Naive thymus-derived CD4-positive, alpha-beta T cell (primary cell): ENCODE measurements at regions of chr1 and their contacts with region 1.

Region 1: GRCh38 chr1:160519642-160520435 is 3.2 kb downstream of the SLAMF6 start:
- DNase-seq: peak in 6 of 9 donors; percentile 33 to 60 (median 46)
- ATAC-seq: peak; percentile 72
- H3K4me3 ChIP-seq: peak overlapping the region; percentile 51
- H3K4me3 Mint-ChIP-seq: peak overlapping the region; percentile 87 to 98 (median 94)
- H3K27ac ChIP-seq: peak overlapping the region; percentile 84
- H3K27ac Mint-ChIP-seq: peak overlapping the region; percentile 88 to 99 (median 92)
- H3K4me1 ChIP-seq: peaks cover 34 to 53% of the 10 kb centered on the region in 2 donors
- H3K4me1 Mint-ChIP-seq: peaks cover 56 to 98% (median 93%) of the 10 kb centered on the region in 7 donors
- H3K27me3 ChIP-seq: no peaks in the 10 kb centered on the region
- H3K27me3 Mint-ChIP-seq: no peaks in the 10 kb centered on the region

Region 2: GRCh38 chr1:160428655-160429054 is 91.2 kb before region 1 on chr1:
- CTCF ChIA-PET with region 1: interaction called, 3 read pairs
- POLR2A ChIA-PET with region 1: interaction called, 6 read pairs
- intact Hi-C with region 1: loop called (anchors 1 to 2 kb)
- DNase-seq: peak in 6 of 9 donors; percentile 35 to 61 (median 47)
- ATAC-seq: peak; percentile 54
- H3K4me3 ChIP-seq: no peak overlapping the region
- H3K4me3 Mint-ChIP-seq: peak overlapping the region; percentile 3 to 74 (median 62)
- H3K27ac ChIP-seq: peak overlapping the region; percentile 68
- H3K27ac Mint-ChIP-seq: peak overlapping the region; percentile 84 to 99 (median 91)
- H3K4me1 ChIP-seq: peaks cover 55 to 56% of the 10 kb centered on the region in 2 donors
- H3K4me1 Mint-ChIP-seq: peaks cover 32 to 77% (median 68%) of the 10 kb centered on the region in 7 donors
- H3K27me3 ChIP-seq: no peaks in the 10 kb centered on the region
- H3K27me3 Mint-ChIP-seq: no peaks in the 10 kb centered on the region

Region 3: GRCh38 chr1:160460683-160461287 is 59.1 kb before region 1 on chr1:
- CTCF ChIA-PET with region 1: no interaction called
- POLR2A ChIA-PET with region 1: no interaction called
- intact Hi-C with region 1: loop called in 1 of 2 experiments (anchors 10 kb)
- DNase-seq: no peak
- ATAC-seq: no peak
- H3K4me3 ChIP-seq: peak overlapping the region; percentile 5
- H3K4me3 Mint-ChIP-seq: peak overlapping the region; percentile 9 to 86 (median 76)
- H3K27ac ChIP-seq: peak overlapping the region; percentile 27
- H3K27ac Mint-ChIP-seq: peak overlapping the region; percentile 20 to 96 (median 87)
- H3K4me1 ChIP-seq: peaks cover 7 to 25% of the 10 kb centered on the region in 2 donors
- H3K4me1 Mint-ChIP-seq: peaks cover 19 to 84% (median 67%) of the 10 kb centered on the region in 7 donors
- H3K27me3 ChIP-seq: no peaks in the 10 kb centered on the region
- H3K27me3 Mint-ChIP-seq: no peaks in the 10 kb centered on the region

Region 4: DNA sequence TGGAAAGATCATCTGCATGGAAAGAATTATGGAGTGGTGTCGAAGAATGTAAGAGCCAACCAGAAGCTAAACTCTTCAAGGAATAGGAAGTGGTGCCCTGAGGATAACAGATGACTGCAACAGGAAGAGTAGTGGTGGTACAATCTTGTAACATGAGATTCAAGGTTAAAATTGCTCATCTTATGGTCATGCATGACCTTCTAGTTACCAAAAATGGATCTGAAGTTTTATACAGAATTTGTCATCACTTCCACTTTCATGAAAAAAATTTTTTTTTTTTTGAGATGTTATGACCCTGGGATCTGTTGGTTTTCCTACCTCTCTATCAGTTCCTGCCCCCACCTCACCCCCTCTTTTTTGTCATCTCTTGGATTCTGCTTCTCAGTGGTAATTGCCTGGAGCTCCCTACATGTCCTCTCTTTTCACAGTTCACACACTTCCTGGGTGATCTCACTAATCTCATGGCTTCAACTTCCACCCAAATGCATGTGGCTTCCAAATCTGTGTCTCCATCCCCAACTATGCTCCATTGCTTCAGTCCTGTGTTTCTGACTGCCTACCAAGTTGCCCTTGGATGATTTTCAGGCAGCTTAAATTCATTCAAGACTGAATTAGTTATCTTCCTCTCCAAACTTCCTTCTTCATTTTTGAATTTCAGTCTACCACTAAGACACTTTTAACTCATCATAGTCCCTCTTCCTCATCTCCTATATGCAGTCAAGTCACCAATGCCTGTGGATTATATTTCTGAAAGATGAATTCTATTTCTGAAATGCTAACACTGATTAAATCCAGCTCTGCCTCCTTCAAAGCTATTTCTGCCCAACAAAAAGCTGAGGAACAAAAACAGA is 45.2 kb before region 1 on chr1:
- CTCF ChIA-PET with region 1: no interaction called
- POLR2A ChIA-PET with region 1: no interaction called
- intact Hi-C with region 1: loop called (anchors 5 to 10 kb)
- DNase-seq: no peak
- ATAC-seq: no peak
- H3K4me3 ChIP-seq: no peak overlapping the region
- H3K4me3 Mint-ChIP-seq: no peak overlapping the region
- H3K27ac ChIP-seq: no peak overlapping the region
- H3K27ac Mint-ChIP-seq: no peak overlapping the region
- H3K4me1 ChIP-seq: peaks cover 17% of the 10 kb centered on the region in 2 donors
- H3K4me1 Mint-ChIP-seq: peaks cover 0 to 9% (median 1%) of the 10 kb centered on the region in 7 donors
- H3K27me3 ChIP-seq: no peaks in the 10 kb centered on the region
- H3K27me3 Mint-ChIP-seq: no peaks in the 10 kb centered on the region

Region 5: GRCh38 chr1:160494620-160495019 is 25.2 kb before region 1 on chr1:
- CTCF ChIA-PET with region 1: no interaction called
- POLR2A ChIA-PET with region 1: interaction called, 3 read pairs
- intact Hi-C with region 1: loop called in 1 of 2 experiments (anchors 2 kb)
- DNase-seq: no peak
- ATAC-seq: no peak
- H3K4me3 ChIP-seq: no peak overlapping the region
- H3K4me3 Mint-ChIP-seq: no peak overlapping the region
- H3K27ac ChIP-seq: no peak overlapping the region
- H3K27ac Mint-ChIP-seq: peak overlapping the region in 5 of 9 donors; percentile 14 to 66 (median 32)
- H3K4me1 ChIP-seq: peaks cover 0 to 3% of the 10 kb centered on the region in 2 donors
- H3K4me1 Mint-ChIP-seq: peaks cover 4 to 37% (median 21%) of the 10 kb centered on the region in 7 donors
- H3K27me3 ChIP-seq: no peaks in the 10 kb centered on the region
- H3K27me3 Mint-ChIP-seq: no peaks in the 10 kb centered on the region

Region 6: GRCh38 chr1:160575112-160575664 is 55.3 kb after region 1 on chr1:
- CTCF ChIA-PET with region 1: interaction called, 10 read pairs
- POLR2A ChIA-PET with region 1: interaction called, 4 read pairs
- intact Hi-C with region 1: loop called (anchors 2 kb)
- DNase-seq: peak in 1 of 9 donors; percentile 23
- ATAC-seq: peak; percentile 67
- H3K4me3 ChIP-seq: peak overlapping the region; percentile 66
- H3K4me3 Mint-ChIP-seq: peak overlapping the region; percentile 71 to 97 (median 86)
- H3K27ac ChIP-seq: peak overlapping the region; percentile 79
- H3K27ac Mint-ChIP-seq: peak overlapping the region; percentile 52 to 97 (median 94)
- H3K4me1 ChIP-seq: peaks cover 55 to 86% of the 10 kb centered on the region in 2 donors
- H3K4me1 Mint-ChIP-seq: peaks cover 69 to 100% (median 94%) of the 10 kb centered on the region in 7 donors
- H3K27me3 ChIP-seq: no peaks in the 10 kb centered on the region
- H3K27me3 Mint-ChIP-seq: no peaks in the 10 kb centered on the region